IMR-90 (cell line): ENCODE measurements at regions of chr2 and their contacts with region 1.

Region 1: DNA sequence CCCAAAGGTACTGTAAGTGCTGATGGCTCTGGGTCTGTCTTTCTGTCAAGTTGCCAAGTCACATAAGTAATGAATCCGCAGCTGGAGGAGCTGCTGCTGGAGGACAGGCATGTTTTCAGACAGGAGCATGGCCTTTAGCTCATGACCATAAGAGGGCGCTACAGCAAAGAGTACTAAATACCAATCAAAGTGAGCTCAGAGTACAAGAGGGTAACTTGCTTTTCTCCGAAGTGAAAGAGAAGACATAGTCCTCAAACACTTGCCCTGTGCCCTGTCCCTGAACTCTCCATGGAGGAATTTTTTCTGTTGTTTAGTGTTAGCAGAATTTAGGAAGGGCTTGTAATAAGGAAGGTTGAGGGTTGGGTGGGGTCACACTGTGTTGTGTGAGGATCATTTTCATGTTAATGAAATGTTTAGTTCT is 58.0 kb upstream of the EML6 start:
- DNase-seq: peak; percentile 68
- ATAC-seq: no peak
- H3K4me3 ChIP-seq: no peak overlapping the region
- H3K27ac ChIP-seq: no peak overlapping the region
- H3K4me1 ChIP-seq: peaks cover 17% of the 10 kb centered on the region
- H3K27me3 ChIP-seq: no peaks in the 10 kb centered on the region
- CTCF ChIP-seq: peak; percentile 45
- POLR2A ChIP-seq: no peak
- RAD21 ChIP-seq: peak; percentile 29; the same call in 1 of the 2 replicates

Region 2: GRCh38 chr2:54254180-54254579 is 411.3 kb before region 1 on chr2:
- CTCF ChIA-PET with region 1: no interaction called
- POLR2A ChIA-PET with region 1: no interaction called
- dilution Hi-C with region 1: no loop called
- in situ Hi-C with region 1: no loop called
- intact Hi-C with region 1: no loop called
- DNase-seq: no peak
- ATAC-seq: no peak
- H3K4me3 ChIP-seq: no peak overlapping the region
- H3K27ac ChIP-seq: no peak overlapping the region
- H3K4me1 ChIP-seq: no peaks in the 10 kb centered on the region
- H3K27me3 ChIP-seq: no peaks in the 10 kb centered on the region
- CTCF ChIP-seq: no peak
- POLR2A ChIP-seq: no peak
- RAD21 ChIP-seq: no peak

Region 3: GRCh38 chr2:54321047-54321446 is 344.4 kb before region 1 on chr2:
- CTCF ChIA-PET with region 1: no interaction called
- POLR2A ChIA-PET with region 1: no interaction called
- dilution Hi-C with region 1: no loop called
- in situ Hi-C with region 1: no loop called
- intact Hi-C with region 1: no loop called
- DNase-seq: no peak
- ATAC-seq: no peak
- H3K4me3 ChIP-seq: no peak overlapping the region
- H3K27ac ChIP-seq: no peak overlapping the region
- H3K4me1 ChIP-seq: no peaks in the 10 kb centered on the region
- H3K27me3 ChIP-seq: peaks cover 2% of the 10 kb centered on the region; the same call in 1 of the 2 replicates
- CTCF ChIP-seq: no peak
- POLR2A ChIP-seq: no peak
- RAD21 ChIP-seq: no peak

Region 4: DNA sequence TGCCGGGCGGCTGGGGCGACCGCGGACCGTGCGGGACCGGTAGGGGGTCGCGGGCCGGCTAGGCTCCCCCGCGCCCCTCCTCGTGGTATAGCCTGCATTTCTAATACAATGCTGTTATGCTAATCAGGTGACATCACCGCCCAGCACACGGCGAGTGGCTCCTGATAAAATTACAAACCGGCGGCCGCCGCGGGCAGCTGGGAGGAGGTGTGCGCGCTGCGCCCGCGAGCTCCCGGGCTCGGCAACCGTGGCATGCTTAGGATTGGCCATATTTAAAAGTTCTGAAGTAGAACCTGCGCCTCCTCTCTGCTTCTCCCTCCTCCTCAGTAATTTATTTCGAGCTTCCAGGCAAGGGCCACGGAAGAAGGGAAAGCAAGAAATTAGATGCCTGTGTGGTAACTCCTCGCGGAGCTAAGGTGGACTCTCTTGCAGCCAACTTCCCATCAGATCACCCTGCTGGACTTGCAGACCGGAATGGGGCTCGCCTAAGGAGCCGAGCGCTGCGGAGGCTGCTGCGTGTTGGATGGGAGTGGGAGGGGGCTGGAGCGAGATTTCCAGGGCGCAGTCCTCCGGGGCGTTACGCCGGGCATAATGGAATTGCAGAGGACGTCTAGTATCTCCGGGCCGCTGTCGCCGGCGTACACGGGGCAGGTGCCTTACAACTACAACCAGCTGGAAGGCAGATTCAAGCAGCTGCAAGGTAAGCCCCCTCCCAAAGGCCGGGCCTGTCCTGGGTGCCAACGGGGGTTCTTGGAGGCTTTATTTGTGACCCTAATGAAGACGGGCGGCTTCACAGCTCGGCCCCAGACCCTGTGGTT is 107.0 kb before region 1 on chr2:
- CTCF ChIA-PET with region 1: no interaction called
- POLR2A ChIA-PET with region 1: no interaction called
- dilution Hi-C with region 1: no loop called
- in situ Hi-C with region 1: no loop called
- intact Hi-C with region 1: no loop called
- DNase-seq: peak; percentile 64
- ATAC-seq: peak; percentile 47
- H3K4me3 ChIP-seq: peak overlapping the region; percentile 54
- H3K27ac ChIP-seq: peak overlapping the region; percentile 3; the same call in 1 of the 2 replicates
- H3K4me1 ChIP-seq: peaks cover 21% of the 10 kb centered on the region
- H3K27me3 ChIP-seq: no peaks in the 10 kb centered on the region
- CTCF ChIP-seq: no peak
- POLR2A ChIP-seq: no peak
- RAD21 ChIP-seq: no peak

Region 5: DNA sequence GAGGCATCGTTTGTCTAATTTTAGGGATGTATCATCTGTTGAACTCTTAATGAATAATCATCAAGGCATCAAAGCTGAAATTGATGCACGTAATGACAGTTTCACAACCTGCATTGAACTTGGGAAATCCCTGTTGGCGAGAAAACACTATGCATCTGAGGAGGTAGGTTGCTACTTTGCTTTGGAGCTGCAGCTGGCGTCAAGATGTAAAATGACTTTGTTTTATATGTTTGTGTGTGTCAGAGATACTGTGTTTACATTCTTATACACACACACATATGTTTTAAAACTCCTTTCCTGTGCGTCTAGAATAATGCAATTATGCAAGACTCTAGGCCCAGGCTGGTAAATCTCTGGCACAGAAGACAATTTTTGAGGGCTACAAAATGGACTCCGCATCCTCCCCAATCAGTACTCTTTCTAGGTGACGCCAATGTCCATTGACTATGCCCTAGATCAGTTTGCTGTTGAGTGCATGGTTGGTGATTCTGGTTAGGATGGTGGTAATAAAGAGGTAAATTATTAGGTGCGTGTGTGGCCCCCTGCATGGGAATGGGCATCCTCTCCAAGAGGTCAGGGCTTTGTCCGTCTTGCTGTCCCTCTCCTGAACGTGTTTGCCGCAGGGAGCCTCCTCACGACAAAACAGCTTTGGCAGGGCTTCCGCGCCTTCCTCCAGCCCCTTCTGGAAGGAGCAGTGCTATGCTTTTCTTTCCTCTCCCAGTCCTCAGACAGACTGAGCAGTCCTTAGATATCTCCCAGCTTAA is 10.2 kb before region 1 on chr2:
- CTCF ChIA-PET with region 1: interaction called, 11 read pairs
- POLR2A ChIA-PET with region 1: no interaction called
- dilution Hi-C with region 1: no loop called
- in situ Hi-C with region 1: no loop called
- intact Hi-C with region 1: no loop called
- DNase-seq: peak; percentile 69
- ATAC-seq: no peak
- H3K4me3 ChIP-seq: no peak overlapping the region
- H3K27ac ChIP-seq: no peak overlapping the region
- H3K4me1 ChIP-seq: peaks cover 6% of the 10 kb centered on the region; the same call in 1 of the 2 replicates
- H3K27me3 ChIP-seq: no peaks in the 10 kb centered on the region
- CTCF ChIP-seq: no peak
- POLR2A ChIP-seq: no peak
- RAD21 ChIP-seq: no peak